Ovary (tissue), 10 donors: ENCODE measurements at regions of chr2 and their contacts with region 1.

Region 1: GRCh38 chr2:113889471-113890252 is at the start of gene ACTR3:
- DNase-seq: peak; percentile 98 to 99 (median 98)
- H3K4me3 ChIP-seq: peak within 1 kb of the TSS; percentile 76
- H3K27ac ChIP-seq: peak within 1 kb of the TSS; percentile 85 to 87
- H3K4me1 ChIP-seq: peaks cover 2% of the 10 kb centered on the region
- H3K27me3 ChIP-seq: no peaks in the 10 kb centered on the region
- CTCF ChIP-seq: no peak
- EP300 ChIP-seq: no peak
- POLR2A ChIP-seq: peak; percentile 61
- total RNA-seq, gene ACTR3: 42.1 to 167 (median 133) TPM

Region 2: GRCh38 chr2:113756355-113757137 is 133.1 kb before region 1 on chr2 and contains the start of gene SLC35F5:
- intact Hi-C with region 1: loop called in 2 of 4 experiments (anchors 2 kb)
- DNase-seq: peak; percentile 88 to 97 (median 94)
- H3K4me3 ChIP-seq: peak within 1 kb of the TSS; percentile 96
- H3K27ac ChIP-seq: peak within 1 kb of the TSS; percentile 59 to 88
- H3K4me1 ChIP-seq: peaks cover 3% of the 10 kb centered on the region
- H3K27me3 ChIP-seq: no peaks in the 10 kb centered on the region
- CTCF ChIP-seq: peak in 1 of 3 donors; percentile 18
- EP300 ChIP-seq: no peak
- POLR2A ChIP-seq: peak; percentile 88
- total RNA-seq, gene SLC35F5: 48.3 to 77.9 (median 62.7) TPM